CD4-positive, alpha-beta T cell (primary cell): ENCODE measurements at regions of chr12 and their contacts with region 1.

Region 1: GRCh38 chr12:74537707-74538385 is at the start of gene ATXN7L3B:
- DNase-seq: peak; percentile 93 to 98 (median 96)
- ATAC-seq: peak; percentile 91
- H3K4me3 ChIP-seq: peak within 1 kb of the TSS; percentile 94
- H3K4me3 Mint-ChIP-seq: peak within 1 kb of the TSS; percentile 95
- H3K27ac ChIP-seq: peak within 1 kb of the TSS; percentile 91 to 95
- H3K27ac Mint-ChIP-seq: peak within 1 kb of the TSS; percentile 100
- H3K4me1 ChIP-seq: peaks cover 36% of the 10 kb centered on the region
- H3K4me1 Mint-ChIP-seq: peaks cover 59% of the 10 kb centered on the region
- H3K27me3 ChIP-seq: no peaks in the 10 kb centered on the region
- H3K27me3 Mint-ChIP-seq: no peaks in the 10 kb centered on the region
- CTCF ChIP-seq: no peak
- total RNA-seq, gene ATXN7L3B: 46.1 to 47.7 TPM

Region 2: GRCh38 chr12:74021937-74022336 is 515.9 kb before region 1 on chr12:
- CTCF ChIA-PET with region 1: no interaction called
- POLR2A ChIA-PET with region 1: no interaction called
- intact Hi-C with region 1: loop called in 1 of 2 experiments (anchors 5 kb)
- DNase-seq: peak in 3 of 14 experiments; percentile 2 to 7 (median 3)
- ATAC-seq: no peak
- H3K4me3 ChIP-seq: no peak overlapping the region
- H3K4me3 Mint-ChIP-seq: no peak overlapping the region
- H3K27ac ChIP-seq: no peak overlapping the region
- H3K27ac Mint-ChIP-seq: no peak overlapping the region
- H3K4me1 ChIP-seq: no peaks in the 10 kb centered on the region
- H3K4me1 Mint-ChIP-seq: no peaks in the 10 kb centered on the region
- H3K27me3 ChIP-seq: no peaks in the 10 kb centered on the region
- H3K27me3 Mint-ChIP-seq: no peaks in the 10 kb centered on the region
- CTCF ChIP-seq: peak; percentile 15

Region 3: DNA sequence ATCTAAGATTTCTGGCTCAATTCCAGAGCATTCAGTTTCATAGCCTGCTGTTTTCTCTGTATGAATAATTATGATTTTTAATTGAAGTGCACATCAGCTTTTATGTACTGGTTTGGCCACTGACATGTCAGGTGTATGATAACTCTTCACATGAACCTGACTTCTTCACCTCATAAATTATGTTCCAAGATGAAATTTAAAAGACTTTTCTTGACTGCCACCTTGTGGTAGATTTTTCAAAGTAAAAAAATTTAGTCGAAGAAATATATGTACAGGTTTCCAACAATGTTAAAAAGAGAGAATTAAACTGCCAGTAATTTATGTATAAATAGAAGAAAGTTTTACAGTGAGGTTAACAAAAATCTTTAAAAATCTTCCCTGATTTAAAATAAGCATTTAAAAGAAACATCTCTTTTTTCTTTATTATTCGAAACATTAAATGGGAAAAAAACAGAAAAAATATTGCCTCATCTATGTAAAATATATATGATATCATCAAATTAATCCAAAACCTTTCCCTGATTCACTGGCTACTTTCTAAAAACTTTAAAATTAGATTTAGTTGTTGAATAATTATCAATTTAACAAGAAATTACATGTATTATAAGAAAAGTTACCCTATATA is 125.1 kb before region 1 on chr12:
- CTCF ChIA-PET with region 1: no interaction called
- POLR2A ChIA-PET with region 1: no interaction called
- intact Hi-C with region 1: loop called in 1 of 2 experiments (anchors 5 kb)
- DNase-seq: peak in 2 of 14 experiments; percentile 7 to 9
- ATAC-seq: no peak
- H3K4me3 ChIP-seq: no peak overlapping the region
- H3K4me3 Mint-ChIP-seq: no peak overlapping the region
- H3K27ac ChIP-seq: no peak overlapping the region
- H3K27ac Mint-ChIP-seq: no peak overlapping the region
- H3K4me1 ChIP-seq: no peaks in the 10 kb centered on the region
- H3K4me1 Mint-ChIP-seq: no peaks in the 10 kb centered on the region
- H3K27me3 ChIP-seq: peaks cover 0 to 4% of the 10 kb centered on the region in 2 experiments
- H3K27me3 Mint-ChIP-seq: peaks cover 13% of the 10 kb centered on the region
- CTCF ChIP-seq: peak; percentile 33

Region 4: DNA sequence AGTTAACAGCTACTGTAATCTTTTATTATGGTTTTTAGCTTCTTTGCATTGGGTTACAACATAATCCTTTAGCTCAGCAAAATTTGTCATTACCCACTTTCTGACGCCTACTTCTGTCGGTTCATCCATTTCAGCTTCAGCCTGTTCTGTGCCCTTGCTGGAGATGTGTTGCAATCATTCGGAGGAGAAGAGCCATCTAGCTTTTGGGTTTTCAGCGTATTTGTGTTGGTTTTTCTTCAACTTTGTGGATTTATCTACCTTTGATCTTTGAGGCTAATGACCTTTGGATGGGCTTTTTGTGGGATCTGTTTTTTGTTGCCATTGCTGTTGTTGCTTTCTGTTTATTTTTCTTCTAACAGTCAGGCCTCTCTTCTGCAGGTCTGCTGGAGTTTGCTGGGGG is 69.4 kb before region 1 on chr12:
- CTCF ChIA-PET with region 1: no interaction called
- POLR2A ChIA-PET with region 1: no interaction called
- intact Hi-C with region 1: no loop called
- DNase-seq: no peak
- ATAC-seq: no peak
- H3K4me3 ChIP-seq: no peak overlapping the region
- H3K4me3 Mint-ChIP-seq: no peak overlapping the region
- H3K27ac ChIP-seq: no peak overlapping the region
- H3K27ac Mint-ChIP-seq: no peak overlapping the region
- H3K4me1 ChIP-seq: no peaks in the 10 kb centered on the region
- H3K4me1 Mint-ChIP-seq: no peaks in the 10 kb centered on the region
- H3K27me3 ChIP-seq: no peaks in the 10 kb centered on the region
- H3K27me3 Mint-ChIP-seq: peaks cover 27% of the 10 kb centered on the region
- CTCF ChIP-seq: no peak